ENCODE measurements at regions of chr10 and their contacts with region 1.

Region 1: DNA sequence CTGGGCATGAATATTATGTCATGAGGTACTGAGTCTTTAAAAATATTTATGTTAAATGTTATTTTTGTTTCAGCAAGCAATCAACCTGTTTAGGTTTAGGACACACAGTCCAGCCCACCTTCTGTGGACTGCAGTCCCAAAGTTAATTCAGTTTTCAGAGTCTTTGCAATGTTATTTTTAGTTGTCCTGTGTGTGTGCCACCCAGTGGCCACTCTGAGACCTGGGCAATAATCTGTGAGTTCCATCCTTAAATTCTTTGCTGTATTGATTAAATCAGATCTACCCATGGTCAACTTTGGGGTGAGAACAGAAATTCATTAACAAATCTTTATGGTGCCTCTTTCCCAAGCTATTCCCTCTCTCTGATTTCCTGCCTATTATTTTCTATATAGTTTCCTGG is 415.1 kb downstream of the CCSER2 start:
- ATAC-seq: no peak
- H3K4me3 ChIP-seq: no peak overlapping the region
- H3K27ac ChIP-seq: no peak overlapping the region
- H3K4me1 ChIP-seq: no peaks in the 10 kb centered on the region

Region 2: DNA sequence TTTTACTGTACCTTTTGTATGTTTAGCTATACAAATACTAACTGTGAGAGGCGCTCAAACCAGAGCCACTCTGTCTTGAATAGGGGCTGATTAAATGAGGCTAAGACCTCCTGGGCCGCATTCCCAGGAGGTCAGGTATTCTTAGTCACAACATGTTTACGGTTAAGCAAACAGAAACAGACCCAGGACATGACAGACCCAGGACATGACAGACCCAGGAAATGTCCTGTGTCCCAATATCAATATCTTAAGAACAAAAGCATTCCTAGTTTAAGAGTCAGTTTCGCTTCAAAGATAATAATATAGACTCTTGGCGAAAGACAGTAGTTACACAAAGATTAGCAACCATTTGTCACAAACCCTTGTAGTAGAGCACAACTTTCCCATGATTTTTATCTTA is 110.6 kb before region 1 on chr10:
- in situ Hi-C with region 1: loop called in 1 of 9 experiments (anchors 25 kb)
- ATAC-seq: no peak
- H3K4me3 ChIP-seq: no peak overlapping the region
- H3K27ac ChIP-seq: no peak overlapping the region
- H3K4me1 ChIP-seq: no peaks in the 10 kb centered on the region

Measured in motor neuron (in vitro differentiated cells).